ENCODE measurements at regions of chr1 and their contacts with region 1.

Region 1: GRCh38 chr1:206479183-206480125 is 9.2 kb downstream of the IKBKE start:
- DNase-seq: peak; percentile 59
- H3K4me3 ChIP-seq: no peak overlapping the region
- H3K27ac ChIP-seq: no peak overlapping the region
- H3K27me3 ChIP-seq: no peaks in the 10 kb centered on the region
- CTCF ChIP-seq: peak; percentile 83

Region 2: DNA sequence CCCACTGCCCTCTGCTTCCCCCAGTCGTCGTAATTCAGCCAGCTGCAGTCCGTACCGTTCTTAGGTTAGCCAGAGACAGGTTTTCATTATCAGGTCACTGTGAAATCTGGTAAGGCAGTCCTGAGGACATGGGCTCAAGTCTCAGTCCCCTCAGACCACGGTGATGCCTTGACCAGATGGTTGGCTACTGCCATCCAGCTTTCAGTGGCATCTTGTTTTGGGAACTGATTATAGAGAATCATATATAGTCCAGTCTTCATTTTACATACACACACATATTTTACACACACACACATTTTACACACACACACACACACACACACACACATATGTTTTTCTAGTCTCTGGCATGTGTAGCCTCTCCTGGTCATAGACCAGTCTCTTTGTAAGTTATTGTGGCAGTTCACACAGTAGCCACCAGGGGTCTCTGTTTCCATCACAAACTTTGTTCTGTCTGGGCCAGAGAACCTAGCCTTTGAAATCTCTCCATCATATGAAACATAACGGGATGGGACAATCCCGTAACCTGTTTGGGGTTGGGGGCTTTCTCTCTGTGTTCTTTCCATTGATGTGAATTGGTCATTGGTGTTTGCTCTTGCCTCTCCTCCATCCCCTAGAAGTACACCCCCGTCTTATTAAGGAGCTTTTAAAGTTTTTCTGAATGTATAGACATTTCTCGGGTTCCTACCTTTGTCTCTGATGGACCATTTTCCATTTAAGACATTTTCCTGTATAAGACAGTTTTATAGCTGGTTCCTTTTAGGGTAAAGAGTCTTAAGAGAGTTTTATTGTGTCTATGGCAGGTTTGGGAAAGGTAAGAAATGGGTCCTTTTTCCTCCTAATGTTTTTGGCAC is 17.6 kb before region 1 on chr1:
- CTCF ChIA-PET with region 1: interaction called, 20 read pairs
- POLR2A ChIA-PET with region 1: no interaction called
- DNase-seq: peak; percentile 41
- H3K4me3 ChIP-seq: no peak overlapping the region
- H3K27ac ChIP-seq: no peak overlapping the region
- H3K27me3 ChIP-seq: no peaks in the 10 kb centered on the region
- CTCF ChIP-seq: peak; percentile 84

Region 3: GRCh38 chr1:206489980-206490770 is 10.7 kb after region 1 on chr1:
- CTCF ChIA-PET with region 1: interaction called, 15 read pairs
- POLR2A ChIA-PET with region 1: no interaction called
- DNase-seq: no peak
- H3K4me3 ChIP-seq: no peak overlapping the region
- H3K27ac ChIP-seq: no peak overlapping the region
- H3K27me3 ChIP-seq: no peaks in the 10 kb centered on the region
- CTCF ChIP-seq: peak; percentile 99

Region 4: DNA sequence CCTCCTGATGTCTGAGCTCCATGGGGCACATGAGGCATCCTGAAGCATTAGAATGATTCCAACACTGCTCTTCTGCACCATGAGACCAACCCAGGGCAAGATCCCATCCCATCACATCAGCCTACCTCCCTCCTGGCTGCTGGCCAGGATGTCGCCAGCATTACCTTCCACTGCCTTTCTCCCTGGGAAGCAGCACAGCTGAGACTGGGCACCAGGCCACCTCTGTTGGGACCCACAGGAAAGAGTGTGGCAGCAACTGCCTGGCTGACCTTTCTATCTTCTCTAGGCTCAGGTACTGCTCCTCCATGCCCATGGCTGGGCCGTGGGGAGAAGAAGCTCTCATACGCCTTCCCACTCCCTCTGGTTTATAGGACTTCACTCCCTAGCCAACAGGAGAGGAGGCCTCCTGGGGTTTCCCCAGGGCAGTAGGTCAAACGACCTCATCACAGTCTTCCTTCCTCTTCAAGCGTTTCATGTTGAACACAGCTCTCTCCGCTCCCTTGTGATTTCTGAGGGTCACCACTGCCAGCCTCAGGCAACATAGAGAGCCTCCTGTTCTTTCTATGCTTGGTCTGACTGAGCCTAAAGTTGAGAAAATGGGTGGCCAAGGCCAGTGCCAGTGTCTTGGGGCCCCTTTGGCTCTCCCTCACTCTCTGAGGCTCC is 16.8 kb after region 1 on chr1:
- CTCF ChIA-PET with region 1: interaction called, 15 read pairs
- POLR2A ChIA-PET with region 1: no interaction called
- DNase-seq: no peak
- H3K4me3 ChIP-seq: no peak overlapping the region
- H3K27ac ChIP-seq: peak overlapping the region; percentile 21
- H3K27me3 ChIP-seq: no peaks in the 10 kb centered on the region
- CTCF ChIP-seq: no peak

Measured in AG04450 (cell line).